CD4-positive, alpha-beta T cell (primary cell): ENCODE measurements at regions of chr7 and their contacts with region 1.

Region 1: DNA sequence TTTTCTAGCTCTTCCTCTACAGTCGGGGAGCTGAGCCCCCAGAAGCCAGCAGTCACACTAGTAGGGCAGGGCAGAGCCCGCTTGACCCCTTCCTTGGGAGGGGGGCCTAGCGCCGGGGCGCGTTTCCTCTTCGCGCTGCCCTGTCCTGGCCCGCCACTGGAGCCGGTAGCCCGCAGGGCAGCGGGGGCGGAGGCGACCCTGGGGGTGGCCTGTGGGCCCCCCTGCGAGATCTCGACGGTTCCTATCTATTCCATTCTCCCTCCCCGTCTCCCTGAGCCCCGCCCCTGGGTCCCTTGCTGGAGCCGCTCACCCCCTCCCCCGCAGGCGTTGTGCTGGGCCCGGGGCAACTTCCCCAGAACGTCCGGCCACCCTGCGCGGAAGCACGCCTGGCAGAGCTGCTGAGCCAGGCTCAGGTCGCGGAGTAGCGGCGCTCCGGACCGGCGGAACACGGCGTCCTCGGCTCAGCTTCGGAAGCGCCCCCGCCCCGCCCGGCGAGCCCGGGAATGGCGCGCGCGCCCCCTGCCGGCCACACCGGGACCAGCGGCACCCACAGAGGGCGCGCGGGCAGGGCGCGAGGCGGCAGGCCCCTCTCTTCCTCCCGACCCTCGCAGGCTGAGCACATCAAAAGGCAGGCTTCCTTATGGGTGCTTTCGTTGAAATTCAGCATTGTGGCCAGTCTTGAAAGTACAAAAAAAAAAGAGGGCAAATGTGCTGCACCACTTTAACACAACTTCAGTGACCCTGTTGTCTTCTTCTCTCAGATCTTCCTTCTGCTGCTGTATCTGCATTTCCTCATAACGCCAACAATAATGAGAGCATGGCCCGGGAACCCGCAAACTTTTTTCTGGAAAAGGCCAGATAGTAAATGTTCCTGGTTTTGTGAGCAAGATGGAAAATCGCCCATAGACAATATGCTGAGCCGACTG is 327.6 kb downstream of the TNS3 start:
- DNase-seq: peak in 11 of 14 experiments; percentile 6 to 67 (median 33)
- ATAC-seq: peak; percentile 57
- H3K4me3 ChIP-seq: peak overlapping the region; percentile 30
- H3K4me3 Mint-ChIP-seq: peak overlapping the region; percentile 68
- H3K27ac ChIP-seq: no peak overlapping the region
- H3K27ac Mint-ChIP-seq: no peak overlapping the region
- H3K4me1 ChIP-seq: peaks cover 11% of the 10 kb centered on the region
- H3K4me1 Mint-ChIP-seq: peaks cover 11% of the 10 kb centered on the region
- H3K27me3 ChIP-seq: peaks cover 12 to 19% of the 10 kb centered on the region in 2 experiments
- H3K27me3 Mint-ChIP-seq: peaks cover 41% of the 10 kb centered on the region
- CTCF ChIP-seq: peak; percentile 68

Region 2: DNA sequence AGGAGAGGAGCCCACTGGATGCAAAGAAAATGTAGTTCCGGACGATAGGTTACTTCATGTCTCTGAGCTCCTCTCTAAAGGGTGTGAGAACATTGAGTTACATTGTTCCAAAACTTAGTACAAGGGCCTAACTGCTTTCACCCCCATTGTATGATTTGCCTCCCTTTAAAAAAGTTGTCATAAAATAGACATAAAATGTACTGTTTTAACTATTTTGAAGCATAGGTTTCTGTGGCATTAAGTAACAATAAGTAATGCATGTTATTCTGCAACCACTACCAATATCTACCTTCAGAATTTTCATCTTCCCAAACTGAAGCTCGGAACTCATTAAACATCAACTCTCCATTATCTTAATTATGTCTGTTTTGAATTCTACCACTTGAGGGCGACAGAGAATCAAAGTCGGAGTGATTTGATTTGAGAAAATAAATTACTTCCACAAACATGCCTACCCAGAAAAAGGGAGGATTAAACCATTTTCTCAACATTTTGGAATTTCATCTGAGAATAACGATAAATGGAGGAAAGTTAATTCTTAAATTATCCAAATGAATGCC is 1363.4 kb before region 1 on chr7:
- CTCF ChIA-PET with region 1: no interaction called
- POLR2A ChIA-PET with region 1: no interaction called
- intact Hi-C with region 1: loop called in 1 of 2 experiments (anchors 2 kb)
- DNase-seq: peak in 3 of 14 experiments; percentile 29 to 36 (median 33)
- ATAC-seq: no peak
- H3K4me3 ChIP-seq: no peak overlapping the region
- H3K4me3 Mint-ChIP-seq: no peak overlapping the region
- H3K27ac ChIP-seq: no peak overlapping the region
- H3K27ac Mint-ChIP-seq: no peak overlapping the region
- H3K4me1 ChIP-seq: no peaks in the 10 kb centered on the region
- H3K4me1 Mint-ChIP-seq: no peaks in the 10 kb centered on the region
- H3K27me3 ChIP-seq: peaks cover 31 to 59% of the 10 kb centered on the region in 2 experiments
- H3K27me3 Mint-ChIP-seq: peaks cover 82% of the 10 kb centered on the region
- CTCF ChIP-seq: peak; percentile 65